ENCODE measurements at regions of chr9 and their contacts with region 1.

Region 1: GRCh38 chr9:109972026-109972882 is 192.3 kb downstream of the PALM2AKAP2 start:
- DNase-seq: no peak
- H3K4me3 ChIP-seq: no peak overlapping the region
- H3K27ac ChIP-seq: no peak overlapping the region
- H3K4me1 ChIP-seq: peaks cover 35 to 42% of the 10 kb centered on the region in 2 donors
- H3K27me3 ChIP-seq: no peaks in the 10 kb centered on the region
- CTCF ChIP-seq: no peak
- POLR2A ChIP-seq: no peak

Region 2: GRCh38 chr9:109918339-109919163 is 53.7 kb before region 1 on chr9:
- intact Hi-C with region 1: loop called (anchors 10 kb)
- DNase-seq: no peak
- H3K4me3 ChIP-seq: no peak overlapping the region
- H3K27ac ChIP-seq: no peak overlapping the region
- H3K4me1 ChIP-seq: peaks cover 11 to 14% of the 10 kb centered on the region in 2 donors
- H3K27me3 ChIP-seq: no peaks in the 10 kb centered on the region
- CTCF ChIP-seq: no peak
- POLR2A ChIP-seq: no peak